GM10248 (cell line): ENCODE measurements at regions of chr22 and their contacts with region 1.

Region 1: GRCh38 chr22:35231585-35232084 is 25.7 kb upstream of the HMGXB4 start:
- DNase-seq: peak; percentile 73
- CTCF ChIP-seq: peak; percentile 97

Region 2: DNA sequence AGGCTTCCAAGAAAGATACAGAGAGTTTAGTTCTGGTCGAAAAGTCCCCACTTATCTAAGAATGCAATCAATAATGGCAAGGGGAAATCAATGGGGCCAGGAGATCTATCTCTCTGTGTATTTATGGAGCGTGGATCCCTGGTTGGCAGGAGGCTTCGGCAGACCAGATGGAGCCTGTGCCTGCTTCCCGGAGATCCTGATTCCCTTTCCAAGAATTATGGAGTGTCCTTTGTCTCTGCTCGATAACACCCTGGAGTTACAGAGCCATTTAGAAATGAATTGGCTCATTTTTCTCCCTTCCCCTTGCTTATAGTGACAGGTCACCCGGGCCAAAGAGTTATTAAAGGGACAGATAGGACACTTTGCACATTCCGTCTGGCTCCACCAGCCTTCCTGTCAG is 73.3 kb before region 1 on chr22:
- CTCF ChIA-PET with region 1: interaction called, 10 read pairs
- POLR2A ChIA-PET with region 1: no interaction called
- DNase-seq: no peak
- CTCF ChIP-seq: no peak

Region 3: GRCh38 chr22:35205961-35206360 is 25.7 kb before region 1 on chr22:
- CTCF ChIA-PET with region 1: interaction called, 17 read pairs
- POLR2A ChIA-PET with region 1: interaction called, 4 read pairs
- DNase-seq: no peak
- CTCF ChIP-seq: no peak

Region 4: DNA sequence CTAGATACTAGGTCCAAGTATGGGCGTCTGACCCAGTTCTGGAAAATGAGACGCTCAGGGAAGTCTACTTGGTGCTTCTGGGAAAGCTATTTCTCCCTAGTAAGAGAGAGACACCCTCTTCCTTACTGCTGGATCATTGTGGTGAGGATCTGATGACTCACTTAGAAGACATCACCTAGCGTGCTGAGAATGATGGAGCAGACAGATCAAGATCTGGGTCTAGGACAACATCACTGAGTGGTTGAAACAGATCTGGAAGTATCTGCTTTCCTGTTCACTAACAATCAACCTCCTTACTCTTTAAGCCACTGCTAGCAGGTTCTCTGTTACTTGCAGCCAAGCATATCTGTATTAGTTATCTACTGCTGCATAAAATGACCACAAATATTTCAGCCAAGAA is 12.6 kb before region 1 on chr22:
- CTCF ChIA-PET with region 1: interaction called, 61 read pairs
- POLR2A ChIA-PET with region 1: no interaction called
- DNase-seq: no peak
- CTCF ChIP-seq: no peak

Region 5: GRCh38 chr22:35250156-35250555 is 18.5 kb after region 1 on chr22:
- CTCF ChIA-PET with region 1: interaction called, 14 read pairs
- POLR2A ChIA-PET with region 1: no interaction called
- DNase-seq: no peak
- CTCF ChIP-seq: no peak